Activated T-helper 1 cell treated with anti-CD3 and anti-CD28 coated beads, Interleukin-12 subunit alpha, Interleukin-12 subunit beta, Interleukin-2, Interleukin-4 antibody, amounts not matched to agents 30 ng/mL and 10 ng/mL and 1 ng/mL, durations not matched to agents 14 hours and 24 hours and 36 hours (primary cell): ENCODE measurements at regions of chr5 and their contacts with region 1.

Region 1: DNA sequence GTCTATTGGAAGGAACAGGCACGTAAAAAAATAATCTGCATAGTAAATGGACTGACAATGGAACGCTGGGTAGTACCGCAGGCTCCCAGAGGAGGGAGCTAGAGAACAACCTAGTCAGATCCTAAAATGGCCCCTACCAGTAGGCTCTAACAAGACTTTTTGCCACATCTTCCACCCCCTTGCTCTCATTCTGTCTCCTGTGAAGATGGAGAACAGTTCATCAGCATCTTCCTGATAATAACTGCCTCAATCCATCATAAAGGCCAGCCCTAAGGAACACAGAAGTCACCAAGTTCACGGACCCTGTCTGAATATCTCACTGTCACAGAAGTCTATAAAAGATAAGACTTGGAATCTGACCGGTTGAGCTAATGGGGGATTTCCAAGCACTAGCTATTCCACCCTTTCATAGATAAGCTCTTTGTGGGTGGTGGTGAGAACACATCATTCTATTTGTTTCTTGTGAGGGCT is 133.4 kb downstream of the SLC1A3 start:
- DNase-seq: peak; percentile 48
- H3K4me3 Mint-ChIP-seq: no peak overlapping the region
- H3K27ac Mint-ChIP-seq: no peak overlapping the region
- H3K4me1 Mint-ChIP-seq: peaks cover 7% of the 10 kb centered on the region
- H3K27me3 Mint-ChIP-seq: peaks cover 27% of the 10 kb centered on the region

Region 2: GRCh38 chr5:36870399-36871040 is 130.7 kb after region 1 on chr5:
- intact Hi-C with region 1: loop called (anchors 1 kb)
- DNase-seq: no peak
- H3K4me3 Mint-ChIP-seq: no peak overlapping the region
- H3K27ac Mint-ChIP-seq: no peak overlapping the region
- H3K4me1 Mint-ChIP-seq: peaks cover 41% of the 10 kb centered on the region
- H3K27me3 Mint-ChIP-seq: peaks cover 3% of the 10 kb centered on the region

Region 3: DNA sequence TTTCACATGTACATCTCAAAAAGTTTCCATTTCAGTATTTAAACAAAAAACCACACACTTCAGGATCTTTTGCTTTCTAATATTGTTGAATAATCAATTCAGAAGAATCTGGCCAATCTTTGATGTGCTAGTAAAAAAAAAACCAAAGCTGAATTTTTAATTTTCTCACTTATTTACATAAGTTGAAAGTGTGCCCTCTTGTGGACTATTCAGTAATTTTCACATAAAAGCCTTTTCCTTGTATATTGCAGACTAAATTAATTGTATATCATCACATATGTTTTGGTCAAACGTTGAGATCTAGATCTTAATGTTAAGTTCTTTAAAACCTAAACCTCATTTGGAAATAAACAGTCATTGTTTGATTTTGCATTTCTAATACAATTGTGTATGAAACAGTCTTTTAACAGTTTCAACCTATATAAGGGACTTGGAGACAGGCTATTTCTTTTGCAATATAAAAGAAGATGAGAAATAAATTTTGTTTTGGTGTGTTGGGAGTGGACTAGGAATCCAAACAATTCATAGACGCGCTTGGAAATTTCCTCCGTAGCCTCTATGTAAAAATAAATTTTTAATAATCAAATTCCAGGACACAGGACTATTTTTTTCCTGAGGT is 204.9 kb after region 1 on chr5:
- intact Hi-C with region 1: loop called (anchors 1 kb)
- DNase-seq: no peak
- H3K4me3 Mint-ChIP-seq: no peak overlapping the region
- H3K27ac Mint-ChIP-seq: no peak overlapping the region
- H3K4me1 Mint-ChIP-seq: peaks cover 5% of the 10 kb centered on the region
- H3K27me3 Mint-ChIP-seq: no peaks in the 10 kb centered on the region

Region 4: GRCh38 chr5:37005946-37006540 is 266.3 kb after region 1 on chr5:
- intact Hi-C with region 1: loop called (anchors 1 kb)
- DNase-seq: no peak
- H3K4me3 Mint-ChIP-seq: no peak overlapping the region
- H3K27ac Mint-ChIP-seq: no peak overlapping the region
- H3K4me1 Mint-ChIP-seq: no peaks in the 10 kb centered on the region
- H3K27me3 Mint-ChIP-seq: no peaks in the 10 kb centered on the region

Region 5: DNA sequence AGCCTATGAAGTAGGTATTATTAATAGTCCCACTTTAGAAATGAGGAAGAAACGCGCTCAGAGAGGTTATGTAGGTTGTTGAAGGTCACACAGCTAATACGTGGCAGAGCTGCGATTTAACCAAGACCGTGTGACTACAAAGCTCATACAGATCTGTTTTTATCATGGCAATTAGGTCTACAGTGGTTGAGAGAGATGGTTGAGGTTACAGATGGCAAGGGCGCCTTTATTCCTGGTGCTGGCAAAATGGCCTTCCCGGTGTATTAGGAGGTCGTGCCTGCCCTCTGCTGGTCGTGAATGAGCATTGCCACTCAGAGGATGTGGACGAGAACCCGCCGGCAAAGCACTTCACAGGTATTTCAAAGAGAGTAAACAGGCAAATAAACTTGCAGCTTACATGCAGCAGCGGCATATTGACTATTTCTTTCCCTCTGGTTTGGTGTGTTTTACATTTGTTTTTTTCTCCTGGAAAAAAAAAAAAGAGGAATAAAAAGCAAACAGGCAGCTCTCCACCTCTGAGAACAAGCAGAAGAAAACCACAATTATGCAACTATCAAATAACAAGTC is 1453.3 kb after region 1 on chr5:
- intact Hi-C with region 1: loop called (anchors 10 kb)
- DNase-seq: peak; percentile 31
- H3K4me3 Mint-ChIP-seq: no peak overlapping the region
- H3K27ac Mint-ChIP-seq: no peak overlapping the region
- H3K4me1 Mint-ChIP-seq: no peaks in the 10 kb centered on the region
- H3K27me3 Mint-ChIP-seq: peaks cover 23% of the 10 kb centered on the region